ENCODE measurements at regions of chr5 and their contacts with region 1.

Region 1: DNA sequence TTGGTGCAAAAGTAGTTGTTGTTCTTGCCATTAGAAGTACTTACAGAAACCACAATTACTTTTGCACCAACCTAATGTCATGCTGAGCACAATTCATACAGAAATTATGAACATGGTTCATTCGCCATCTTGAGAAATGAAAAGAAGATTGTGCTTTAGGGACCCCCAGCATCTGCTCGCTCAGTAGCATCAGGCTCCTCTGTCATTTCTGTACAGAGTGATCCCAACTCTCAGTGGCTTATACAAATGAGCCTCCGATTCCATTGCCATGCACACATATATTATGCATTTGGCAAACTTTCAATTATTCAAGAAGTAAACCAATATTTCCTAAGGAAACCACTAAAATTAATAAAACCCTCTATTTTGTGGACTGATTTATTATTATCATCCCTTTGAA is 266.2 kb downstream of the MED10 start:
- DNase-seq: no peak
- ATAC-seq: no peak
- H3K4me3 ChIP-seq: no peak overlapping the region
- H3K27ac ChIP-seq: no peak overlapping the region
- H3K4me1 ChIP-seq: no peaks in the 10 kb centered on the region
- H3K27me3 ChIP-seq: no peaks in the 10 kb centered on the region
- CTCF ChIP-seq: no peak
- POLR2A ChIP-seq: no peak
- RAD21 ChIP-seq: no peak

Region 2: DNA sequence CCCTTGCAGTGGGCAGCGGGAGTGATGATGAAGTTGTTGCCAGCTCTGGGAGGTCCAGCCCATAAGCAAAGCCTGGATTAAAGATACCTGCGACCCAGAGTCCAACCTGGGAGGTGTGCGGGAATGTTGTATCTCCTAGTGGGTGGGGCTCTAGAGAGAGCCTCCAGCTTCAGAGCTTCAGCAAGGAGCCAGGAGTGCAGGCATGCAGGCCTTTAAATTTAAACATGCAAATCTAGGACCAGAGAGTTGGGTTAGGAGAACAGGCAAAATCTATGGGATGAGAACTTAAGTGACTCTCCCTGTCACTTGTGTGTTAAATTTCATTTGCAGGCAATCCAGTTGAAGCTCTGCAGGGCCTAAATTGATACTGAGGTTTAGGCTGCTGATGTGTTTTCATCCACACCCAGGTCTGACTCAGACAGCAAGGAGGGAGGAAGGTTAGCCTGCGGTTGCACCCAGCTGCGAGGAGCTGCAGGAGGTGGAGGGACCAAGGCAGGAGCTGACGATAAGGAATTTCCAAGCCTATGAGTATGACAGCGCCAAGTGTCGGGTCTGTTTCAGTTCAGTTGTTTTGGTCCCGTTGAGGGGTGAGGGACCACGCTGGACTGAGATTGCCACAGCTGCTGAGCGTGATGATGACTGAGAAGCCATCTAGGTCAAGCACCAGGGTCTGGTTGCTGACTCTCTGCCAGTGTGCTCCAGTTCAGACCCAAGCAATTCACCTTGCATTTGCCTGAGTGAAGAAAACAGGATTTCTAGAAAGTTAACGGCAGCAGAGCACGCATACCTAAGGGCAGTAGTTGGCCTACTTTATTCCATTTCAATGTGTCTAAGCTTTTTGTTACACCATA is 446.7 kb before region 1 on chr5:
- CTCF ChIA-PET with region 1: no interaction called
- POLR2A ChIA-PET with region 1: no interaction called
- RAD21 ChIA-PET with region 1: no interaction called
- intact Hi-C with region 1: loop called (anchors 5 kb)
- DNase-seq: peak; percentile 27
- ATAC-seq: peak; percentile 91
- H3K4me3 ChIP-seq: no peak overlapping the region
- H3K27ac ChIP-seq: no peak overlapping the region
- H3K4me1 ChIP-seq: peaks cover 0 to 10% of the 10 kb centered on the region in 2 experiments; a peak in 2 of 4 replicates
- H3K27me3 ChIP-seq: peaks cover 40% of the 10 kb centered on the region; the same call in 1 of the 2 replicates
- CTCF ChIP-seq: no peak
- POLR2A ChIP-seq: no peak
- RAD21 ChIP-seq: no peak

Region 3: DNA sequence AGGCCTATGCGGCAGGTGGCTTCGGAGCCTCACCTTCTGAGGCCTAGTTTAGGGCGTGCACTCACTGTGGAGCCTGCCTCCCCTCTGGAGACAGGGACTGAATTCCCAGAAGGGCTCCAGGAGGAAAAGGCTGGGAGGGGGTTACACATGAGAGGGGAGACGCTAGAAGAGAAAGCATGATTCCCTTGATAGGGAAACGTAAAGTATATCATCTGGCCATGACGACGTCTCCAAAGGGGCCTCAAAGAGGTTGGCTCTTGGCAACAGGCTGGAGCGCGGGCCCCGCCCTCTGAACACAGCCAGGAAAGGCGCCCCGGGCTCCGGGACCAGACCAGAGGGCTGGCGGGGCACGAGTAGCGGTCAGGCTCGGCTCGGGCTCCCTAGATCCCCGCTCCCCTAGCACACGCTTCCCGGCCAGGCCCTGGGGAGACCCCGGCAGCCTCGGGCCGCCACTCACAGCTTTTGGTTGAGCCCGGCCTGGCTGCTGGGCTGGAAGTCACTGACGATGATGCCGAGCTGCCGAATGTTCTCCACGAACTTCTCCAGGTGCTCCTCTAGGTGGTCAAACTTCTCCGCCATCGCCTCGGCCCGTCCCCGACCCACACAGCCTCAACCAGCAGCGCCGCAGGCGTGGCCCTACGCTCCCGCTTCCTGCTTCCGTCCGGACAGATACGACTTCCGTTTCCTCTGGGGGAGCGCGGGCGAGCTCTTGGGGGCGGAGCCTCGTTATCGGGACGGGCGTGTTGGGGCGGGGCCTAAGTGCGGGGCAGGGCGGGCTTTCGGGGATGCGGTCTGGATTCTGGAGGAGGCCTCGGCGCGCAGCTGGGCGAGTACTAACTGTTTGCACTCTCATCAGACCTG is 266.0 kb after region 1 on chr5 and contains the start of gene MED10:
- CTCF ChIA-PET with region 1: no interaction called
- POLR2A ChIA-PET with region 1: no interaction called
- RAD21 ChIA-PET with region 1: no interaction called
- intact Hi-C with region 1: no loop called
- DNase-seq: peak; percentile 82
- ATAC-seq: peak; percentile 98
- H3K4me3 ChIP-seq: peak within 1 kb of the TSS; percentile 87 to 93
- H3K27ac ChIP-seq: peak within 1 kb of the TSS; percentile 79
- H3K4me1 ChIP-seq: peaks cover 9 to 14% of the 10 kb centered on the region in 2 experiments; a peak in 3 of 4 replicates
- H3K27me3 ChIP-seq: no peaks in the 10 kb centered on the region
- CTCF ChIP-seq: no peak
- POLR2A ChIP-seq: peak; percentile 38
- RAD21 ChIP-seq: no peak
- total RNA-seq, gene MED10: 35.0 TPM